Activated B cell treated with CpG ODN at 0.5 μM for 24 hours (primary cell): ENCODE measurements at regions of chr2 and their contacts with region 1.

Region 1: DNA sequence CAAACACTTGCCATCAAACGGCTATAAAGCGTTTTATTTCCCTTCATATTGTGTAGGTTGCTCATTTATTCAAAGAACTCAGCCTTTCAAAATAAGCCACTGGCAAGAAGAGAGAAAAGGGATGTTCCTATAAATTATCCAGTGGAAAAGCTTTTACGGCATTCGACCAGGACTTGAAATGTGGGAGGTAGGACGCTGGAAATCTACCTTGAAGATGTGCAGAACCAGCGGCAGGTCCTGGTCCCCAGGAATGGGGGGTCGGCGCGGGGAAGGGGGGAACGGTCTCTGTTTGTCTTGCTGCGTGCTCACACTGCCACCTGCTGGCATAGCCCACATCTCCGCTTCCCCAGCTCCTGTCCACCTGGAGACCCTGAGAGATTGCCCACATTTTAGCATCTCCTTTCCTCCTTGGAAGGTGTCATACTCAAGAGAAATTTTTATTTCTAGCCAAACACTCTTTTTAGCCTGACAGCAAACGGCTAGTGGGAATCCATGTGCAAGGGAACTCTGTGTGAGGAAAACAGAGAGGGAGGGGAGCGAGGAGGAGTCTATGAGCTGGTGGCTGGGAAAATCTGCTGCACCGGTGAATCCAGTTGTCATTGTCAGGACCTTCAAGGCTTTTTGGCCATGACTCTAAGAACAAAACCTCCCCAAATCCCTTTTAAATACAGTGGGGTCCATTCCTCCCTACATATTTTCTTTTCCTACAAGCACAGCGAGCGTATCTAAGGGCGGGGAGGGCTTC is 349.0 kb upstream of the PKDCC start:
- DNase-seq: no peak
- ATAC-seq: no peak
- H3K4me3 Mint-ChIP-seq: no peak overlapping the region
- H3K27ac Mint-ChIP-seq: no peak overlapping the region
- H3K4me1 Mint-ChIP-seq: no peaks in the 10 kb centered on the region
- H3K27me3 Mint-ChIP-seq: peaks cover 4% of the 10 kb centered on the region
- CTCF ChIP-seq: no peak

Region 2: GRCh38 chr2:39913648-39914461 is 1785.0 kb before region 1 on chr2:
- CTCF ChIA-PET with region 1: interaction called, 24 read pairs
- POLR2A ChIA-PET with region 1: no interaction called
- intact Hi-C with region 1: loop called (anchors 1 kb)
- DNase-seq: no peak
- ATAC-seq: peak; percentile 34
- H3K4me3 Mint-ChIP-seq: no peak overlapping the region
- H3K27ac Mint-ChIP-seq: no peak overlapping the region
- H3K4me1 Mint-ChIP-seq: no peaks in the 10 kb centered on the region
- H3K27me3 Mint-ChIP-seq: peaks cover 2% of the 10 kb centered on the region
- CTCF ChIP-seq: no peak

Region 3: DNA sequence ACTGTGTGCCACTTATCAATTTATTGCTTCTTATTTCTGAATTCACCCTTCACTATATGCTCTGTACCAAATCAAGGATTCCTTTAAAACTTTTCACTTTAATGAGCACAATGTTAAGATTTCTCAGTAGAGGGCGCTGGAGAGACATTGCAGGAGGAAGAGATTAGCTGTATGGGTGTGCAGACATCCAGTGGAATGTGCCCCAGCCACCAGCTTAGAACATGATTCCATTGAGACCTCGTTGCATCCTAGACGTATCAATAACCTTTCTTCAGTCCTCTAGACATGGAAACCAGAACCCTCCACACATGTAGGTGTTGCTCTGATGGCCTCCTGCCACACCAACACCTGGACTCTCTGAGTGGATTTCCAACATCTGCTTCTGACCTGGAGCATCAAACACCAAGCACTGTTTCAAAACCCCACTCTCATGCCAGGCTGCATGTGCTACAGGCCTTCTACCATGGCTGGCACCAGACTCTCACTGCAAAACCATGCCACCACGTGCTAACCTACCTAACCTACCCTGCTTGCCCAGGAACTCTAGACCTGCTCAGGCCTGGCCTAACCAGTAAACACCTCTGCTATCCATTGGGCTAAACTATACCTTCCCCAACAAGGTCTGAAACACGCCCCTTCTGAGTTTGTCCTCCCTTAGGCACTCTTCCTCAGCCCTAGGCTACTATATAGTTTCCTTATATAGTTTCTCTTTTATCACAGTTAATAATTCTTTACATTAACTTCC is 284.2 kb before region 1 on chr2:
- CTCF ChIA-PET with region 1: no interaction called
- POLR2A ChIA-PET with region 1: no interaction called
- intact Hi-C with region 1: loop called (anchors 5 kb)
- DNase-seq: no peak
- ATAC-seq: no peak
- H3K4me3 Mint-ChIP-seq: no peak overlapping the region
- H3K27ac Mint-ChIP-seq: no peak overlapping the region
- H3K4me1 Mint-ChIP-seq: no peaks in the 10 kb centered on the region
- H3K27me3 Mint-ChIP-seq: no peaks in the 10 kb centered on the region
- CTCF ChIP-seq: no peak

Region 4: DNA sequence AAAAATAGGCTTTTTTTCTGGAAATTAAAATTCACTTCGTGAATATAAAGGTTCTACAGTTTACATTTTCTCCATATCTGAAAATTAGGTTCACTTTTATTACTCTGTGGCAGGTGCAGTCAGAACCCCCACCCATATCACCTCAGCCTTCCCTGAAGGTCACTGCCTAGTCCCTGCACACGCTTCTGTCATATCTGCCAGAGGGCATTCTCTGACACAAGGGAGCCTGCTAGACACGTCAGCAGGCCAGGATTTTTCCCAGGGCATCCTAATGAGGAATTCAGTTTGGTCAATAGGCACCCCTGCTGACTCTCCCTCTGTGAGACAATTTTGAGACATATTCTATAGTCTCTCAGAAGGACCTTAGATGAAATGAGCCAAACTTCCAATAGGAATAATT is 126.7 kb before region 1 on chr2:
- CTCF ChIA-PET with region 1: no interaction called
- POLR2A ChIA-PET with region 1: no interaction called
- intact Hi-C with region 1: no loop called
- DNase-seq: no peak
- ATAC-seq: no peak
- H3K4me3 Mint-ChIP-seq: no peak overlapping the region
- H3K27ac Mint-ChIP-seq: no peak overlapping the region
- H3K4me1 Mint-ChIP-seq: no peaks in the 10 kb centered on the region
- H3K27me3 Mint-ChIP-seq: no peaks in the 10 kb centered on the region
- CTCF ChIP-seq: no peak